ENCODE measurements at regions of chr20 and their contacts with region 1.

Region 1: DNA sequence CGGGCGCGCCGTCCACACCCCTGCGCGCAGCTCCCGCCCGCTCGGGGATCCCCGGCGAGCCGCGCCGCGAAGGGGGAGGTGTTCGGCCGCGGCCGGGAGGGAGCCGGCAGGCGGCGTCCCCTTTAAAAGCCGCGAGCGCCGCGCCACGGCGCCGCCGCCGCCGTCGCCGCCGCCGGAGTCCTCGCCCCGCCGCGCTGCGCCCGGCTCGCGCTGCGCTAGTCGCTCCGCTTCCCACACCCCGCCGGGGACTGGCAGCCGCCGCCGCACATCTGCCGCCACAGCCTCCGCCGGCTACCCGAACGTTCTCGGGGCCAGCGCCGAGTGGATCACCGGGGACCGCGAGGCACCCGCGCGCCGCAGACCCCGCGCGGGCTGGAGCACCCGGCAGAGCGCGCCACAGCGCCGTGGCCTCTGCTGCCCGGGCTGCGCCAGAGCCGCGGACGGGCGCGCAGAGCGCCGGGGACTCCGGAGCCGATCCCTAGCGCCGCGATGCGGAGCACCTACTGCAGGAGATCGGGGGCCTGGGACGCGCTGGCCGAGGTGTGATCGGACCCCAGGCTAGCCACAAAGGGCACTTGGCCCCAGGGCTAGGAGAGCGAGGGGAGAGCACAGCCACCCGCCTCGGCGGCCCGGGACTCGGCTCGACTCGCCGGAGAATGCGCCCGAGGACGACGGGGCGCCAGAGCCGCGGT is at the start of gene BMP2:
- DNase-seq: peak in 1 of 2 donors; percentile 72
- H3K4me3 ChIP-seq: peak within 1 kb of the TSS; percentile 86 to 87
- H3K27ac ChIP-seq: peak within 1 kb of the TSS; percentile 76 to 89
- H3K4me1 ChIP-seq: peaks cover 3 to 8% of the 10 kb centered on the region in 2 donors
- H3K27me3 ChIP-seq: no peaks in the 10 kb centered on the region
- CTCF ChIP-seq: no peak
- total RNA-seq, gene BMP2: 31.1 TPM

Region 2: DNA sequence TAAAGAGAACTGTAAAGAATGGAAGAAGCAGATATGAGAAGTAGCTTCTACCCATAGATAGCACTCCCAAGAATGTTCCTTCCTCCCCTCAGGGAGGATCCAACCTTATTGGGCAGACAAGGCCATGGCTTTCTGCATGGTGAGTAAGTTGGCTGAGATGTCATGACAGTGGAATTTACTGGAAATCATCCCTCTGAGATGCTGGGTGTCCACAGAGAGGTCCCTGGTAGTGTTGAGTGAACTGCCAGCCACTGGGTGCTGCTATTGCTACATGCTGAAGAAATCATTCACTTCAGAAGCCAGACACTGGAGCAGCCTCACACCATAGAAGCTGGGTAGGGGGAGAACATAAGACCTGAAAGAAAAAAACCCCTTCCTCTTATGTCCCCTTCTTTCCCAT is 598.4 kb before region 1 on chr20:
- intact Hi-C with region 1: loop called (anchors 10 kb)
- DNase-seq: no peak
- H3K4me3 ChIP-seq: no peak overlapping the region
- H3K27ac ChIP-seq: no peak overlapping the region
- H3K4me1 ChIP-seq: peaks cover 0 to 5% of the 10 kb centered on the region in 2 donors
- H3K27me3 ChIP-seq: no peaks in the 10 kb centered on the region
- CTCF ChIP-seq: no peak

Region 3: DNA sequence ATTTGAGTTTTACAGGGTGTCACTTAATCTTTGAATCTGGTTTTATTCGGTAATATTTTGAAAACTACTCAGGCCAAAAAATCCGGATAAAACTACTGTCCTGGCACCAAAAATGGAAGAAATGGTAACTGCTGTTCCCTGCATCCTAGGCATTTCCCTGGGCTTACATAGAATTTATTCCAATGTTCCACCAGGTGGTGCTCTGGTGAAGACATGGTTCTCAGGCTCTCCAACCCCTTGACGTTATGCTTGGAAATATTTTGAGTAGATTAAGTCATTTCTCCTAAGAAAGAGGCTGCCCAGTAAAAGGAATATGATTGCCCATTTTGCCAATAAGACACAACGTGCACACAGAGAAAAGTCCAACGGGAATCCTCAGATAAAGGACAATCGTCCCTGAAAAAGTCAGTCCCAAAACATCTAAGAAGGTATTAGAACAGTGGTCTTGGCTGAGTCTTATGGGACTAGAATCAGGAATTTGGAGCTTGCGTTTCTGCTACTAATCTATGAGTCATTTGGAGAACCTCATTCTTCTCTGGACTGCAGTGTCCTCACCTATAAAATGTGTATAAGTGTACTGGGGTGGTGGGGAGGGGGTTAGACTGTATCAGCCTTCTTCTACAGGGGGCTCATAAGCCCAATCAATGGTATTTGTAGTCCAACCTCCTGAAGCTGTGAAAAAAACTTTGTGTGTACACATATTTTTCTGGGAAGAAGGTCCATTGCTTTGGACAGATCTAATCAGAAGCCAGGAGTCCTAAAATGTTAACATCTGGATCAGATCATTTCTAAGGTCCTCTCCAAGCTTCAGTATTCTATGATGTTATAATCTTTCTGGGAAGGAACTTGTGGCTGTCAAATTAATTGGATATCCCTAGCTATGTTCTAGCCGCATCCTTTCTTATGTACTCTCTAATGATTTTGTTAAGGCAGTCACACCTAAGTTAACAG is 131.2 kb before region 1 on chr20:
- intact Hi-C with region 1: loop called (anchors 2 kb)
- DNase-seq: peak in 1 of 2 donors; percentile 63
- H3K4me3 ChIP-seq: no peak overlapping the region
- H3K27ac ChIP-seq: no peak overlapping the region
- H3K4me1 ChIP-seq: peaks cover 0 to 4% of the 10 kb centered on the region in 2 donors
- H3K27me3 ChIP-seq: no peaks in the 10 kb centered on the region
- CTCF ChIP-seq: peak; percentile 54 to 76 (median 59)

Region 4: GRCh38 chr20:6819605-6820004 is 51.9 kb after region 1 on chr20:
- intact Hi-C with region 1: no loop called
- DNase-seq: no peak
- H3K4me3 ChIP-seq: no peak overlapping the region
- H3K27ac ChIP-seq: no peak overlapping the region
- H3K4me1 ChIP-seq: no peaks in the 10 kb centered on the region
- H3K27me3 ChIP-seq: no peaks in the 10 kb centered on the region
- CTCF ChIP-seq: peak in 1 of 3 experiments; percentile 27

Region 5: GRCh38 chr20:7859356-7859802 is 1091.7 kb after region 1 on chr20:
- intact Hi-C with region 1: loop called (anchors 5 kb)
- DNase-seq: no peak
- H3K4me3 ChIP-seq: no peak overlapping the region
- H3K27ac ChIP-seq: no peak overlapping the region
- H3K4me1 ChIP-seq: no peaks in the 10 kb centered on the region
- H3K27me3 ChIP-seq: no peaks in the 10 kb centered on the region
- CTCF ChIP-seq: peak; percentile 36 to 74 (median 51)

Measured in ascending aorta (tissue), 2 donors.